PC-3 (cell line): ENCODE measurements at regions of chr15 and their contacts with region 1.

Region 1: GRCh38 chr15:57306161-57306943 is 70.0 kb upstream of the CGNL1 start:
- DNase-seq: peak; percentile 66
- ATAC-seq: peak; percentile 76
- H3K4me3 ChIP-seq: peak overlapping the region; percentile 57; the same call in 1 of the 2 replicates
- H3K27ac ChIP-seq: no peak overlapping the region
- H3K4me1 ChIP-seq: peaks cover 12% of the 10 kb centered on the region
- H3K27me3 ChIP-seq: no peaks in the 10 kb centered on the region
- CTCF ChIP-seq: peak; percentile 77

Region 2: GRCh38 chr15:57146506-57147201 is 159.7 kb before region 1 on chr15:
- CTCF ChIA-PET with region 1: no interaction called
- POLR2A ChIA-PET with region 1: no interaction called
- intact Hi-C with region 1: loop called (anchors 1 kb)
- DNase-seq: peak; percentile 63
- ATAC-seq: peak; percentile 46; the same call in 1 of the 2 replicates
- H3K4me3 ChIP-seq: 0 out of 2 replicates have a peak overlapping the region, but pooled peaks have one; percentile 16
- H3K27ac ChIP-seq: no peak overlapping the region
- H3K4me1 ChIP-seq: no peaks in the 10 kb centered on the region
- H3K27me3 ChIP-seq: no peaks in the 10 kb centered on the region
- CTCF ChIP-seq: peak; percentile 72

Region 3: GRCh38 chr15:57218826-57219576 is 87.4 kb before region 1 on chr15:
- CTCF ChIA-PET with region 1: no interaction called
- POLR2A ChIA-PET with region 1: no interaction called
- intact Hi-C with region 1: loop called (anchors 5 kb)
- DNase-seq: no peak
- ATAC-seq: no peak
- H3K4me3 ChIP-seq: no peak overlapping the region
- H3K27ac ChIP-seq: no peak overlapping the region
- H3K4me1 ChIP-seq: peaks cover 27% of the 10 kb centered on the region
- H3K27me3 ChIP-seq: no peaks in the 10 kb centered on the region
- CTCF ChIP-seq: no peak

Region 4: DNA sequence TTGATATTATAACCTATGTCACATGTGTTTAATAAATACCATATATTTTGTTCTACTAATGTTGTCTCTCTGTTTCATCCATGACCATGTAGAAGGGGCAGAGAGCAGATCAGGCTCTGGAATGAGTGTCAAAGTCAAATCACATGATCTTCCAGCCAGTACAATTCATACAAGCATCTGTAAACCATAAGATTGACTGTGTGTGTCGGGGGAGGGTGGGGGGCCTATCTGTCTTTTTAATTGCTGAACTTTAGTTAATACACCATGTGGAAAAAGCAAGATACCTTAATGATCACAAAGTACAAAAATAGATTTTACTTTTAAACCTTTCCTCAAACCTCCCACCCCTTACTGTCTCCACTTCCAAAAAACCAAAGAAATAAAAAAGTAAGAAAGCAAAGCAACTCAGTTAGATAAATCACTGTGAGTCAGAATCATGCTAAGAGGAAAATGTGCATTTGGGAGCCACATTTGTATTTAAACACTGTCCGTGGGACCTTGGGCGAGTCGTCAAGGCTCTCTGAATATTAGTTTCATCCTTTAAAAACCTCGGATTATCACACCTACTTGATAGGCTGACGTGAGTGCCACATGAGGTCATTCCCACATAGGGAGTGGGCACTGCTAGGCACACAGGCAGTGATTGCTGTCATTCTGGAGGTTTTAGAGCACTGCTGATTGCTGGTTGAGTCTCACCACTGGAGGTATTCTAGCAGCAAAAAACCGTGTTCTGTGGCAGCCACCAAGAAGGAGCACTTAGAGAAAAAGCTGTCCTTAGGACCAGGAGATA is 379.1 kb after region 1 on chr15:
- CTCF ChIA-PET with region 1: no interaction called
- POLR2A ChIA-PET with region 1: no interaction called
- intact Hi-C with region 1: no loop called
- DNase-seq: no peak
- ATAC-seq: no peak
- H3K4me3 ChIP-seq: no peak overlapping the region
- H3K27ac ChIP-seq: no peak overlapping the region
- H3K4me1 ChIP-seq: peaks cover 3% of the 10 kb centered on the region
- H3K27me3 ChIP-seq: no peaks in the 10 kb centered on the region
- CTCF ChIP-seq: no peak